Activated naive CD4-positive, alpha-beta T cell treated with anti-CD3 and anti-CD28 coated beads, Interleukin-2, amount 10 ng/mL, durations not matched to agents 7 days and 5 days (primary cell): ENCODE measurements at regions of chr20 and their contacts with region 1.

Region 1: GRCh38 chr20:561437-562231 is 18.0 kb upstream of the CSNK2A1 start:
- DNase-seq: peak; percentile 71
- H3K4me3 Mint-ChIP-seq: no peak overlapping the region
- H3K27ac Mint-ChIP-seq: no peak overlapping the region
- H3K4me1 Mint-ChIP-seq: no peaks in the 10 kb centered on the region
- H3K27me3 Mint-ChIP-seq: peaks cover 31% of the 10 kb centered on the region

Region 2: DNA sequence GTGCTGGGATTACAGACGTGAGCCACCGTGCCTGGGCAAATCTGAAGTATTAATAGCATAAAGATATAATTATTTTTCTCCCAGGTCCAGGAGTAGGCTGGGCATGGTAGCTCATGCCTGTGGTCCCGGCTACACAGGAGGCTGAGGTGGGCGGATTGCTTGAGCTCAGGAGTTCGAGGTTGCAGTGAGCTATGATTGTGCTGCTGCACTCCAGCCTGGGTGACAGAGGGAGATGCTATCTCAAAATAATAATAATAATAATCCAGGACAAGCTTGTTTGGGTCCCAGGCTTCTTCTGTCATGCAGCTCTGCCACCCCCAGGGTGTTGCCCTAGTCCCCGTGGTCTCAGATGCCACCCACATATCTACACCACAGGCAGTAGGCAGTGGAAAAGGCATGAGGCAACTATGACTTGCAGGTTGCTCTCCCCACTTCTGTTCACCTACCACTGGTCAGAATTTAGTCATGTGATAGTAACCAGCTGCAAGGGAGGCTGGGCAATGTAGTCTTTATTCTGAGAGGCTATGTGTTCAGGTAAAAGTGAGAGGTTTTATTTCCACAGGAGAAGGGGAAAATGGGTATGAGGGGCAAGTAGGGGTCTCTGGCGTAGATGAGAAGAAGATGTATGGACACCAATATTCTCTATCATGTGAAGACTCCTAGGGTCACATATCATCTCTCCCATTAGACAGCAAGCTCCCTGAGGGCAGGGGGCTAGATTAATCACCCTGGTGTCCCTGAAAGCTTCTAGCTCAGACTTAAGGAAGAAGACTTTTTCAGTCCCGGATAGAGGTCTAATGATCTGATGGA is 22.7 kb after region 1 on chr20:
- CTCF ChIA-PET with region 1: no interaction called
- DNase-seq: no peak
- H3K4me3 Mint-ChIP-seq: no peak overlapping the region
- H3K27ac Mint-ChIP-seq: no peak overlapping the region
- H3K4me1 Mint-ChIP-seq: no peaks in the 10 kb centered on the region
- H3K27me3 Mint-ChIP-seq: peaks cover 24% of the 10 kb centered on the region

Region 3: DNA sequence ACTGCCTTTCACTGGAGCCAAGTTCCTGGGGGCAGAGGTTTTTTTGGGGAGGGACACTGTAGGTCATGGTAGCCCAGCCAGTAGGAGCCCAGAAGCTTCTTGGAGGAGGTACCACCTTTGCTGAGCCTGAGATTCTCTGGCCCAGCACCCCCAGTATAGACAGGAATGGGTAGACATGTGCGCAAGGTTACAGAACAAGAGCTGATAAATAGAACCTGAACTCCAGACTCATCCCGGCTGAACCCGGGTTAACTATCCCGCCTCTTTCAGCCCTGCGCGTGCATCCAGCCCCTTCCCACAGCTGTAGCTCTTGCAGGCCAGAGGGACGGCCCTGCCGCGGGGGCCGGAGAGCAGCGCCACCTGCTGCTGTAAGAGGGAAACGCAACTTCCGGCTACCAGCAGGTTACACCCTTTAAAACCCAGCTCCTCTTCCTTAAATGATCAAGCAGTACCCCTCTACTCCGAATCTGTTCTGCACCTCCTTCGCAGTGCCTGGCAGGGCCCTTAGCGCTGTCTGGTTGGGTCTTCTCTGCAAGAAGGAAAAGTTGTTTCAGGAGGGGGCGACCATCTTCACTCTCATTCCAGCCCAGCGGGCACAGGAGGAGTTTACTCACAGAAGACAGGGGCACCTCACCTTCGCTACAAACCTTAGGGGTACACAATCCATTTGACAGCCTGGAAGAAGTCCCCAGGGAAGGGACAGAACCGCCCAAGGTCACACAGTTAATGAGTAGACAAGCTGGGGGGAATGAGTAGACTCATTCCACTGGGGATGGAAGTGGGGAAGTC is 83.9 kb after region 1 on chr20:
- CTCF ChIA-PET with region 1: interaction called, 26 read pairs
- DNase-seq: peak; percentile 77
- H3K4me3 Mint-ChIP-seq: no peak overlapping the region
- H3K27ac Mint-ChIP-seq: no peak overlapping the region
- H3K4me1 Mint-ChIP-seq: peaks cover 12% of the 10 kb centered on the region
- H3K27me3 Mint-ChIP-seq: peaks cover 38% of the 10 kb centered on the region

Region 4: GRCh38 chr20:667391-667964 is 105.8 kb after region 1 on chr20:
- CTCF ChIA-PET with region 1: interaction called, 13 read pairs
- DNase-seq: peak; percentile 76
- H3K4me3 Mint-ChIP-seq: no peak overlapping the region
- H3K27ac Mint-ChIP-seq: no peak overlapping the region
- H3K4me1 Mint-ChIP-seq: peaks cover 15% of the 10 kb centered on the region
- H3K27me3 Mint-ChIP-seq: peaks cover 94% of the 10 kb centered on the region